CD14-positive monocyte (primary cell): ENCODE measurements at regions of chr3 and their contacts with region 1.

Region 1: GRCh38 chr3:194486540-194487288 is at the start of gene ATP13A3:
- DNase-seq: peak; percentile 86 to 91 (median 90)
- H3K4me3 ChIP-seq: peak within 1 kb of the TSS; percentile 69 to 97 (median 95)
- H3K4me3 Mint-ChIP-seq: peak within 1 kb of the TSS; percentile 92 to 97
- H3K27ac ChIP-seq: peak within 1 kb of the TSS; percentile 77 to 90
- H3K27ac Mint-ChIP-seq: peak within 1 kb of the TSS; percentile 91 to 99 (median 95)
- H3K4me1 ChIP-seq: peaks cover 61 to 73% of the 10 kb centered on the region in 2 donors
- H3K4me1 Mint-ChIP-seq: peaks cover 68% of the 10 kb centered on the region
- H3K27me3 ChIP-seq: no peaks in the 10 kb centered on the region
- H3K27me3 Mint-ChIP-seq: peaks cover 0 to 6% (median 1%) of the 10 kb centered on the region in 3 donors
- CTCF ChIP-seq: no peak
- polyA plus RNA-seq, gene ATP13A3: 4.7 to 19.5 (median 5.2) TPM

Region 2: DNA sequence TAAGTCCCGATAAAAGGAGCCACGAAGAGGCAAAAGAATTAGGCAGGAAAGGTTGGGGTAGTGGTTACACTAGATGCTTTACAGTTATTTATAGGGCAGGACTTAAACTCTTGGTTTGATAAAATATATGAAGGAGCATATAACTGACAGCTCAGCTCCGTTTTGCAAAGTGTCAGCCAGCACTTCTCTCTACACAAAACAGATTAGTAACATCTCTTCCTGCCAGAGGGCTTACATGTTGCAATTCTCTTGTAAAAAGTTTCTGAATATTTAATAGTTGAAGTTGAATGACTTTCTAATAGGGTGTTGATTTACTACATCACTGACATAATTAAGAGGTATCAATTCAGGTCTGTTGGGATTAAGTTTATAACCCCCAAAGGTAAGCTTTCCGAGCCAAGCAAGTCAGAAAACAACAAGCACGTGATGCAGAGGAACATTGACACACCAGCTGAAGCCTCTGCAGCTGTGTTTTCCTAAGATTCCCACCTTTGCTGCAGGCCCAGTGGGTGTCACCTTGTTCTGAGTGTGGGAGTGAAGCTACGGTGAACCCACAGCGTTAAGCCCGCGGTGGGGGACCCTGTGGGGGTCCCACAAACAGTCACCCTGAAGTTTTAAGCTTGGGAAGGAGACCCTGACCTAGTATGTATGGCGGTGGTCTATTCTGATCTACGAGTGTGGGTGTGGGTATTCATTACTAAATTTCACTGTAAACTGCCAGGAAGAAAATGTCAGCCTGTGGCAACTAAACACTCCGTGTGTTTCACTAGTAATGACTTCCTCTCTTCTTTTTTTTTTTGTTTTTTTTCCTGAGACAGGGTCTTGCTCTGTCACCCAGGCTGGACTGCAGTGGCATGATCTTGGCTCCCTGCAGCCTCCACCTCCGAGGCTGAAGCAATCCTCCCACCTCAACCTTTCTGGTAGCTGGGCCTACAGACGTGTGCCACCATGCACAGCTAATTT is 22.1 kb after region 1 on chr3:
- intact Hi-C with region 1: no loop called
- DNase-seq: peak in 2 of 3 donors; percentile 41 to 57
- H3K4me3 ChIP-seq: peak overlapping the region in 1 of 3 experiments; percentile 44
- H3K4me3 Mint-ChIP-seq: peak overlapping the region; percentile 24 to 47
- H3K27ac ChIP-seq: peak overlapping the region; percentile 37 to 78
- H3K27ac Mint-ChIP-seq: peak overlapping the region; percentile 68 to 90 (median 85)
- H3K4me1 ChIP-seq: peaks cover 18 to 21% of the 10 kb centered on the region in 2 donors
- H3K4me1 Mint-ChIP-seq: peaks cover 21% of the 10 kb centered on the region
- H3K27me3 ChIP-seq: no peaks in the 10 kb centered on the region
- H3K27me3 Mint-ChIP-seq: peaks cover 0 to 6% (median 3%) of the 10 kb centered on the region in 3 donors
- CTCF ChIP-seq: no peak

Region 3: DNA sequence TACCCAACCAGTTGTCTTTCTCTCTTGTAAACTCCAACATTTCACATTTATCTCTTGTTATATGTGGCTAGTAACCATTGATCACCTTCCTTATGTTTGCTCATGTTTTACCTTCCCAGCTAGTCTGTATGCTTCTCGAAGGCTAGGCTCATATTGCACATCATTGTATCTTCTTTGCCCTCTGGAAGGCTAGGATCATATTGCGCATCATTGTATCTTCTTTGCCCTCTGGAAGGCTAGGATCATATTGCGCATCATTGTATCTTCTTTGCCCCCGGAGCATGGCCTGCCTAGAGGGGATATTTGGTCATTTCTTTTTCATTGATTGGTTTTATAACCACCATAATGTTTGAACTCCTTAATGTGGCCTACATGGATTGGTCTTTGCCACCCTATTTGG is 39.5 kb after region 1 on chr3:
- intact Hi-C with region 1: loop called (anchors 5 kb)
- DNase-seq: no peak
- H3K4me3 ChIP-seq: no peak overlapping the region
- H3K4me3 Mint-ChIP-seq: no peak overlapping the region
- H3K27ac ChIP-seq: peak overlapping the region; percentile 80 to 83
- H3K27ac Mint-ChIP-seq: peak overlapping the region; percentile 88 to 98 (median 94)
- H3K4me1 ChIP-seq: peaks cover 13 to 18% of the 10 kb centered on the region in 2 donors
- H3K4me1 Mint-ChIP-seq: peaks cover 16% of the 10 kb centered on the region
- H3K27me3 ChIP-seq: no peaks in the 10 kb centered on the region
- H3K27me3 Mint-ChIP-seq: peaks cover 0 to 9% (median 3%) of the 10 kb centered on the region in 3 donors
- CTCF ChIP-seq: no peak

Region 4: DNA sequence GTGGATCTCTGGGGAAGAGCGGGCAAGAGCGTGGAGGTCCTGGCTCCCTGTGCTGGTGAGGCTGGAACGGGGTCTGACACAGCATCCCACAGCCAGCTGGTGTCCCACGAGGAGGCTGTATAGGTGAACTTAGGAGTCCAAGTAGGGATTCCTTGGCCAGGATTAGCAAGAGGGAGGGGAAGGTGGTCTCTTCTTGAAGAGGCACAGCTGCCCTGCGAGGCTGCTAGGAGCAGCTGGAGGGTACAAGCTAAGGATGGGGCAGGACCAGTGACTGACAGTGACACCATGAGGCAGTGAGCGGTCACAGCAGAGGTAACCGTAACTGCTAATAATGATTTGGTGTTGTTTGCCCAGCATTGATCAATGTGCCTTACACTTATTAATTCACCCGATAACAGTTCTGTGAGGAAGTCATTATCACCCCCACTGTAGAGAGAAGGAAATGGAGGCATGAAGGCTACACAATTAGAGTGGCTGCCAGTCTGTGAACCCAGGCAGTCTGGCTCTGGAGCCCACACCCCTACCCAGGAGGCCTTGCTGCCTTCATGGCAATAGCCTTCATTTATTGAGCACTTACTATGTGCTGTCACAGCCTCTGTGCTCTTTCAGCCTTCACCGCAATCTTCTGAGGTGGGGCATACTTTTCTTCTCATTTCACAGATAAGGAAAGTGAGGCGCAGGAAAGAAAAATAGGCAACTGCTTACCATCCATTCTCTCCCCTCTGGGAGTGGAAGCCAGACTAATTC is 87.2 kb after region 1 on chr3:
- intact Hi-C with region 1: loop called in 1 of 2 experiments (anchors 5 kb)
- DNase-seq: peak; percentile 36 to 71 (median 66)
- H3K4me3 ChIP-seq: no peak overlapping the region
- H3K4me3 Mint-ChIP-seq: no peak overlapping the region
- H3K27ac ChIP-seq: no peak overlapping the region
- H3K27ac Mint-ChIP-seq: peak overlapping the region in 2 of 7 donors; percentile 37 to 43
- H3K4me1 ChIP-seq: peaks cover 50 to 68% of the 10 kb centered on the region in 2 donors
- H3K4me1 Mint-ChIP-seq: peaks cover 72% of the 10 kb centered on the region
- H3K27me3 ChIP-seq: peaks cover 0 to 9% of the 10 kb centered on the region in 2 donors
- H3K27me3 Mint-ChIP-seq: peaks cover 15 to 20% (median 18%) of the 10 kb centered on the region in 3 donors
- CTCF ChIP-seq: peak; percentile 69

Region 5: GRCh38 chr3:194583604-194584318 is 97.0 kb after region 1 on chr3:
- intact Hi-C with region 1: loop called in 1 of 2 experiments (anchors 5 kb)
- DNase-seq: peak; percentile 91 to 92 (median 92)
- H3K4me3 ChIP-seq: peak overlapping the region; percentile 75 to 96 (median 94)
- H3K4me3 Mint-ChIP-seq: peak overlapping the region; percentile 86 to 94
- H3K27ac ChIP-seq: peak overlapping the region; percentile 85 to 97
- H3K27ac Mint-ChIP-seq: peak overlapping the region; percentile 97 to 100 (median 99)
- H3K4me1 ChIP-seq: peaks cover 32 to 43% of the 10 kb centered on the region in 2 donors
- H3K4me1 Mint-ChIP-seq: peaks cover 37% of the 10 kb centered on the region
- H3K27me3 ChIP-seq: no peaks in the 10 kb centered on the region
- H3K27me3 Mint-ChIP-seq: no peaks in the 10 kb centered on the region
- CTCF ChIP-seq: no peak